ENCODE measurements at regions of chr14 and their contacts with region 1.

Region 1: DNA sequence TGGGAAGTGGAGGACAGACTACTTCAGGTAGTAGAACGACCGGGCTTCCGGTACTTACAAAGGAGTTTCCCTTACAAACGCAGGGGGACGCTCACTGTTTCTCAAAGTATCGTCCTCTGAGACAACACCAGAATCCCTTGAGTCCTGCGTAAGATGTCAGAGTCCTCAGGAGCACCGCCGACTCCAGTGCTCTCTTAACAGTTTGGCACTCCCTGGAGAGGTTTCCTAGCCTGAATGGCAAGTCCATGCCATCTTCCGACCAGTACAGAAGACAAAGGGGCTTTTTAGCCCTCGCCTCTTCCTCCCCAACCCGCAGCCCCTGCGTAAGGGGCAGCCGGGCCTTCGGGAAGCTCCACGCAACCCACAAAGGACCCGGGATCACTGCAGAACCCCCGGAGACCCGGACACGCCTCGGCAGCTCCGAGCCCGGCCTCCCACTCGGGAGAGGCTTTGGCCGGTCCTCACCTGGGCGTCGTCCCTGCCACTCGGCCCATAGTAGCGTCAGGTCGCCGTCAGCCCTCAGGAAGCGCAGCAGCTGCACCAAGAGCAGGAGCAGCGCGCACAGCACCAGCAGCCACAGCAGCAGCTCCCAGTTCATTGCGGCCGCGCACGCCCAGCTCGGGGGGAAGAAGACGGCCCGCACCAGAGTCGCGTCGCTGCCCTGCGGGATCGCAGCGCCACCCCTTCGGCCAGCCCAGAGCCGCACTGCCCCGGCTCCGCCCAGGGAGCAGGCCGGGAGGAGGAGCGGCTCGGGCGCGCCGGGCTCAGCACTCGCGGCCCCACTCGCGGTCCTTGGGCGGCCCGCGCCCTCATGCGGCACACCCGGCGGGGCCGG is at the start of gene DHRS7:
- DNase-seq: peak; percentile 79
- H3K4me3 ChIP-seq: peak within 1 kb of the TSS; percentile 91
- H3K27ac ChIP-seq: peak within 1 kb of the TSS; percentile 96
- H3K4me1 ChIP-seq: no peaks in the 10 kb centered on the region
- H3K27me3 ChIP-seq: no peaks in the 10 kb centered on the region
- CTCF ChIP-seq: peak; percentile 41
- total RNA-seq, gene DHRS7: 82.1 to 87.1 TPM

Region 2: GRCh38 chr14:59964251-59965007 is 200.5 kb before region 1 on chr14:
- intact Hi-C with region 1: loop called (anchors 5 kb)
- DNase-seq: no peak
- H3K4me3 ChIP-seq: no peak overlapping the region
- H3K27ac ChIP-seq: no peak overlapping the region
- H3K4me1 ChIP-seq: no peaks in the 10 kb centered on the region
- H3K27me3 ChIP-seq: no peaks in the 10 kb centered on the region
- CTCF ChIP-seq: no peak

Region 3: DNA sequence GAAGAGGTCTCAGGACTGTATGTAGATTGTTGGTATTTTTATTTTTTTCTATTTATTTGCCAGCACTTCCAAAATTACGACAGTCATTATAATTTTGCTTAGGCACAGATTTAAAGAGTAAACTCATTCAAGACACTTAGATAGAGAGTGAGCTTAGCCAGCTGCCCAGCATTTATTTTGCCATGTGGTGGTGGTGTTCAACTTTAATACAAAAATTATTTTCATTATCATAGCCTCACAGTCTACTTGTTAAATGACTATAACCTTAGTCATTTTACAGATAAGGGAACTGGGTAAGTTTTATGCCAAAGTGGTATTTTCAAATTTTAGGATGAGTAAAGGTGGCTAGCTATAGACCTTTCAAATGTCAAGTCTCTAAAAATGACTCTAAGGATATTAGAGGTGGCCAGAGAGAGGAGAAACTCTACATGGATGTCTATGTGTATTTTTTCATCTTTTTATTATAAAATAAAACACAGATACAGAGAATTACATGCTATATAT is 178.3 kb before region 1 on chr14:
- intact Hi-C with region 1: no loop called
- DNase-seq: no peak
- H3K4me3 ChIP-seq: no peak overlapping the region
- H3K27ac ChIP-seq: no peak overlapping the region
- H3K4me1 ChIP-seq: no peaks in the 10 kb centered on the region
- H3K27me3 ChIP-seq: no peaks in the 10 kb centered on the region
- CTCF ChIP-seq: no peak

Region 4: DNA sequence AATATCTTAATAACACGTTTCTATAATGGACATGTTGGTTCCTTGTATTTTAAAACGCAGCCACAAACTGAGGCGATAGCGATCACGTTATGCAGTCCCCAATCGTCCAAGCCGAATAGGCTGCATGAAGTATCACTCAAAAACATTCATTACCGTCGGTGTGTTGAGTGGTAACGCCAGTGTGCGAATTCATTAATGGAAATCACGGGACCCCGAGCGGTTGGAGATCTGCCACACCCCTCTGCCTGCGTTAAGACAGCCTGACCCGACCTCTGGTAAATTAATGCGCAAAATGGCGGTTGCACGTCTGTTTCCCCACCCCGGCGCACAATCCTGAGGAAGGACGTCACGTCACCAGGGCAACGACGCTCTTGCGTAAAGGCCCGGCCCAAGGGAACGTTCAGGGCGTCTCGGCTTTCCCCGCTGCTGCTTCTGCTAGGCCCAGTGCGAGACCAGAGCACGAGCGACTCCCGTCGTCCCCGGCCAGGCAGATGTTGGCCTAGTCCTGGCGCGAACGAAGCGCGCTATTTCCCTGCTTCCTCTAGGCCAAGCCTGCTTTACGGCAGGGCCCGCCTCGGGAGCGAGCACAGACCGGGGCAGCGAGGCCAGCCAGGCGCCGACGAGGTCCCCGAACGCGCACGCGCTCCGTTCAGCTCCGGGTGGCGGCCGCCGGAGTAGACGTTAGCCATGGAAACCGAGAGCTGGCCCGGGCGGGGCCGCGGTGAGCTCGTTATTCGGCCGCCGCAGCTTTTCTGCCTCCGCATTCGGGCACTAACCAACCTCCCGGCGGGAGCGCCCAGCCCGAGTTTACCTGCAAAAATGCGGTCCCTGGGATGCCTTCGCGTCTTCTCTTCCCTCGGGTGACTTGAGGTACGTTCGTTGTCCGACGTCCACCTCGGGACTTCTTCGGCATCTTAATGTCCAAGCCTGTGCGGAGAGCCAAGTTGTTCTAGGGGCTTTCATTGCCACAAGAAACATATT is 73.1 kb before region 1 on chr14 and contains the start of gene PCNX4:
- intact Hi-C with region 1: loop called (anchors 10 kb)
- DNase-seq: peak; percentile 97
- H3K4me3 ChIP-seq: peak within 1 kb of the TSS; percentile 48
- H3K27ac ChIP-seq: peak within 1 kb of the TSS; percentile 99
- H3K4me1 ChIP-seq: peaks cover 4% of the 10 kb centered on the region
- H3K27me3 ChIP-seq: no peaks in the 10 kb centered on the region
- CTCF ChIP-seq: no peak
- total RNA-seq, gene PCNX4: 19.7 to 23.6 TPM